ENCODE measurements at regions of chr6 and their contacts with region 1.

Region 1: DNA sequence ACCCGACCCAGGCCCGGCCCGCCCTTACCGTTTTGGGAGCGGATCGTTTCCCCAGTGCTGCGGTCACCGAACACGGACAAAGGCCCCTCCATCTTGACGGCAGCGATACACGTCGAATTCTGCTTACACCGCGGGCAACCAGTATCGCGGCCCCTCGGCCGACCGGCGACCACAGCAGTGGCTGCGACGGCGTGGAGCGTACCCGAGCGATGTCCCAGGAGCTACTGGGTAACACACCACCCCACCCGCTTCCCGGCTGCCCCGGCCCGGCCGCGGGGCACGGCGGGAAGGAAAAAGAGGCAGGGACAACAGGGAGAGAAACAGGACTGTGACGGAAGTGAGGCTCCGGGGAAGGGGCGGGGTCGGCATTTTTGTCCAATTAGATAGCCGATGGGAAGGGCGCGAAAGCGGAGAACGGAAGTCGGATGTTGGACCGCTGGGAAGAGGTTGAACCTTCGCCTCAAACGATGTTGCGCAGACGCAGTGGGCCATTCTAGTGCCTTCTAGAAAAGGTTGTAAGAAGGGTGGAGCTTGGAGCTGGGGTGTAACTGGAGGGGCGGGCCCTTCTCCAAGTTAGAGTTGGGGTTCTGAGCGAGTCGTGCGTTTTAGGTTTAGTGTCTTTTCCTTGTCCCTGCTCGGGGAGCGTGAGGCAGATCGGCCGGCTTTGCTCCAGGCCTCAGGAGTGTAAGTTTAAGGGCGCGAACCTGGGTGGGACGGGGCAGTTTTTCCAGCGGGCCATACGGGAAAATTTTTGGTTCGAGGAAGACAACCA is at the start of gene TCP1:
- DNase-seq: peak; percentile 99 to 100
- ATAC-seq: peak; percentile 88 to 90 (median 88)
- H3K4me3 ChIP-seq: peak within 1 kb of the TSS; percentile 96
- H3K27ac ChIP-seq: peak within 1 kb of the TSS; percentile 93
- H3K4me1 ChIP-seq: peaks cover 32% of the 10 kb centered on the region
- H3K27me3 ChIP-seq: no peaks in the 10 kb centered on the region
- CTCF ChIP-seq: no peak
- total RNA-seq, gene TCP1: 156 to 228 (median 193) TPM

Region 2: DNA sequence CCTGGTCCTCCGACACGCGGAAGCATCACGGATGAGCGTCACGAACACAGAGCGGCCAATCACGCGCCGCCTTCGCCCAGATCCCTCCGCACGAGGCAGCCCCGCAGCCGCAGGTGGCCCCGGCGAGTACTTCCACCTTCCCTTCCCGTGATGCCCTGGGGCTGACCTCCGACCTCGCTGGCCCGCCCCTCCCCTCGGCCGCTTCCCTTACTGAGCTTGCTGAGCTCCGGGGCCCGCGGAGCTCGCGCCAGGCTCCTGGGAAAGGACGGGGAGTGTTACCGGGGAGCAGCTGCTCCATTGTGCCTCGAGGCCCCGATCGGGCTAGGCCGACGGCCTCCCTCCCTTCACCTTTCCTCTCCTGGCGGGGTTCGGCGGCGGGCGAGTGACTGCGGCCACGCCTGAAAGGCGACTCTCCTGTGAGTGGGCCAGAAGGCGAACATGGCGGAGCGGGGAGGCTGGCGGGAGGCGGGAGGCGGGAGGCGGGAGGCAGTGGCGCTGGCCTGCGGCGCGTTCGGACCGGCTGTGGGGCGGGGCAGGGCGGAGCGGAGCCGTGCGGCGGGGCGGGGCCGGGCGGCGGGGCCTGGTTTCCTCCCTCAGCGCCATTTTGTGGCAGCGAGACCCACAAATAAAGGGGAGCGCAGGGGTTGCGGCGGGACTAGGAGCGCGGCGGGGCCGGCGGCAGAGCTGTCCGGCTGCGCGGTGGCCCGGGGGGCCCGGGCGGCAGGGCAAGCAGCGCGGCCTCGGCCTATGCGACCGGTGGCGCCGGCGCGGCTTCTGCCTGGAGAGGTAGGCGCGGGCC is 62.4 kb before region 1 on chr6 and contains the start of gene WTAP:
- intact Hi-C with region 1: loop called (anchors 2 to 5 kb)
- DNase-seq: peak; percentile 96 to 97
- ATAC-seq: peak; percentile 94 to 96 (median 96)
- H3K4me3 ChIP-seq: peak within 1 kb of the TSS; percentile 90
- H3K27ac ChIP-seq: peak within 1 kb of the TSS; percentile 97
- H3K4me1 ChIP-seq: peaks cover 49% of the 10 kb centered on the region
- H3K27me3 ChIP-seq: no peaks in the 10 kb centered on the region
- CTCF ChIP-seq: no peak
- total RNA-seq, gene WTAP: 51.8 to 199 (median 107) TPM

Region 3: GRCh38 chr6:159742165-159742564 is 47.4 kb before region 1 on chr6:
- intact Hi-C with region 1: loop called (anchors 5 kb)
- DNase-seq: no peak
- ATAC-seq: peak in 2 of 4 donors; percentile 56 to 60
- H3K4me3 ChIP-seq: no peak overlapping the region
- H3K27ac ChIP-seq: peak overlapping the region; percentile 56
- H3K4me1 ChIP-seq: peaks cover 13% of the 10 kb centered on the region
- H3K27me3 ChIP-seq: no peaks in the 10 kb centered on the region
- CTCF ChIP-seq: no peak

Region 4: DNA sequence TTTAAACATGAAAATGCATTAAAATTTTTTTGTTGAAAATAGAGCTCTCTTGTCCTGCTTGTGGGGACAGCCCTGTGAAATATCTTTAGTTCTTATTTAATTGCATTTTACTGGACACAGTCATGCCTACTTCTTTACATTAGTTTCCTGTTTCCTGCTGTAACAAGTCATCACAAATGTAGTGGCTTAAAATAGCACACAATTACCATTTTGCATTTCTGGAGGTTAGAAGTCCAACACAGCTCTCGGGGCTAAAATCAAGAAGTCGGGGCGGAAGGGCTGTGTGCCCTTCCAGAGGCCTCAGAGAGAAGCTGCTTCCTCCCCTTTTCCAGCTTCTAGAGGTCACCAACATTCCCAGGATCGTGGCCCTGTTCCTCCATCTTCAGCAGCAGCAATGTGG is 40.0 kb after region 1 on chr6:
- intact Hi-C with region 1: no loop called
- DNase-seq: no peak
- ATAC-seq: no peak
- H3K4me3 ChIP-seq: no peak overlapping the region
- H3K27ac ChIP-seq: no peak overlapping the region
- H3K4me1 ChIP-seq: peaks cover 7% of the 10 kb centered on the region
- H3K27me3 ChIP-seq: no peaks in the 10 kb centered on the region
- CTCF ChIP-seq: no peak

Region 5: DNA sequence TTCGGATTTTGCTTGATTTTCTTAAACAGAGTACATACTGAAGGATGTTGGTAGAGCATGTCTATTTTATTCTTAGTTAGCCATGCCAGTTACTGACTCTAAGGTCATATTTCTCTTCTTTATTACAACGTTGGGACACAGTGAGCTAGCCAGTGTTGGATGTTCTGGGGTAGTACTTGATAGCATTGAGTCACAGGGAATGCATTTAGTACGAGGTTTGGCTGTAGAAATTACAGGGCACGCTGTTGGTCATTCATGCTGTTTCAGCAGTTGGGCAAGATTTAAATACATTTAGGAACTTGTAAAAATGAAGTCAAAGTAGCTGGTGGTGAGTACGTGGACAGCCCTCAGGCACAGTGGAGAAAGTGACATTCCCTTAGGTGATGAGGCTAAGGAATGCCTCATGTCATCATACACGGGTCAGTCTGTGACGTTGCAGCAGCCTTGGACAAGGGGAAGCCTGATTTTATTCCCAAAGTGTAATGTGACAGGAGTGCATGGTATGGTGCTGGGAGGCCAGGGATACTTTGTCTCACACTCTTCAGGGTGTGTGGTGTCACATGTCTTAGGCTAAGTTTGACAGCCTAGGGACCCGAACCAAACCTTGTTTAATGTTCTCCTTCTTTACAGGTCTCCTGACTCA is 274.3 kb after region 1 on chr6:
- intact Hi-C with region 1: loop called in 1 of 2 experiments (anchors 5 kb)
- DNase-seq: peak; percentile 47 to 75
- ATAC-seq: peak; percentile 89 to 92 (median 90)
- H3K4me3 ChIP-seq: peak overlapping the region; percentile 13
- H3K27ac ChIP-seq: peak overlapping the region; percentile 91
- H3K4me1 ChIP-seq: peaks cover 18% of the 10 kb centered on the region
- H3K27me3 ChIP-seq: no peaks in the 10 kb centered on the region
- CTCF ChIP-seq: no peak